Gastrocnemius medialis (tissue), 4 donors: ENCODE measurements at regions of chr14 and their contacts with region 1.

Region 1: DNA sequence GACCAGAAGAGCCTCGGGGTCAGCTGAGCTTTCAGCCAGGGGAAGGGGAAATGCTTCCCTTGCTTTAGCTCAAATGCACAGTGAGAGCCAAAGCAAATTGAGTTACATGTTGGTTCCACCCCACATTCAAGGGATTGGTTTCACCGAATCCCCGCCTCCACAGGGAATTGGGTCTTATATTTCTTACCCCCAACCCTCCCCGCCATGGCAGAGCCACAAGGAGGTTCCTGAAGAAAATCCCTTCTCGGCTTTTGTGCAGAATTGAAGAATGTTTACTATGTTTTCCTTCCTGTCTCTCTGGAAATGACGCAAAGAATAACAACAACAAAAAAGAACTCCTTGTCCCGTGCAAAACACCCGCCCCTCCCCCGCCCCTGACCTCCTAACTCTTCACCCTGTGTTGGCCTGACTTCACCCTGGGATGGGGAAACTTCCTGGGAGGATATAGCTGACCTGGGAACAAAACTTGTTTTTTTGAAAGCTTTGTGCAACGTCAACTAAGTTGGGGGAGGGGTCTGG is 21.9 kb upstream of the CIPC start:
- DNase-seq: peak; percentile 72 to 87
- ATAC-seq: peak; percentile 86 to 91
- H3K4me3 ChIP-seq: peak overlapping the region; percentile 47 to 54 (median 50)
- H3K27ac ChIP-seq: peak overlapping the region; percentile 80 to 94 (median 90)
- H3K4me1 ChIP-seq: peaks cover 13 to 31% of the 10 kb centered on the region in 2 donors
- H3K27me3 ChIP-seq: no peaks in the 10 kb centered on the region
- CTCF ChIP-seq: no peak
- POLR2A ChIP-seq: peak; percentile 57 to 73

Region 2: DNA sequence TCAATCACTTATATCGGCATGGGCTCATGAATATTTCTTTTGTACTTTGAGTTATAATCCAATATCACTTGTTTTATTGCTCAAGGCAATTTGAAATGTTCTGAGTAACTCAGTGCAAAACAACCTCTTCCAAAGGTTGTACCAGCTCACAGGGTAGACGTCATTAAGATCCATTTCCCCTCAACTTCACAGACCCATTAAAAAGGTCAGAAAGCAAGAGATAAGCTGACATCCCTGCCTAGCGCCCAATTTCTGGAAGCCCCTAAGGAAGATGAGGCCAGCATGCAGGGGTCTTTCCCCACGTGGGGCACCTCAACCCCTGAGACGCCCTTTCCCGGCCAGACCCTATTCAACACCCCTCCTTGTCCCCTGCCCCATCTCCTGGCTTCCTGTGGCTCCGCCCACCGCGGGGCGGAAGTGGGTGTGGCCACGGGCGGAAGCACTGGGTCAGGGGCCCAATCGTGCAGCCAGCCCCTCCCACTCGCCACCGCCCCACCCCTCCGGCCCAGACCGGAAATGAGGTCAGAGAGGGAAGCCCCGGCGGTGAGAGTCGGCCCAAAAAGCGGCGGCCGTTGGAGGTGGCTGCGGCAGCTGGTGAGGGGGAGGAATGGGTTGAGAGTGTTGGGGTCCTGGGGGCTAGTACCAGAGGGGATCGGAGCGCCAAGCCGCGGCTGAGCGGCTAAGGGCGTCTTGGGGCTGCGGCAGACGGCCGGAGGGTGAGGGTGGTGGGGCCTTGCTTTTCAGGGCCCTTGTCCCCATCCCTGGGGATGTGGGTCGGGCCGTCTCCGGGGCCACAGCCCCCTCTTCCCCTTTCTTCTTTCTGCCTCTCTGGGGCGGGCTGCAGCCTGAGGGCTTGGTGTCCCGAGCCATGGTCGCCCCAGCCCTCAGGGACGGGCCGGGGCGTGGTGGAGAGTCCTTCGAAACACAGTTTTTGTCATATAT is 924.5 kb before region 1 on chr14 and contains the start of gene GPATCH2L:
- in situ Hi-C with region 1: no loop called
- intact Hi-C with region 1: no loop called
- DNase-seq: peak; percentile 89 to 95
- ATAC-seq: peak; percentile 90 to 95
- H3K4me3 ChIP-seq: peak within 1 kb of the TSS; percentile 81 to 99 (median 92)
- H3K27ac ChIP-seq: peak within 1 kb of the TSS; percentile 83 to 95 (median 94)
- H3K4me1 ChIP-seq: peaks cover 42 to 44% of the 10 kb centered on the region in 2 donors
- H3K27me3 ChIP-seq: no peaks in the 10 kb centered on the region
- CTCF ChIP-seq: no peak
- POLR2A ChIP-seq: peak; percentile 93
- total RNA-seq, gene GPATCH2L: 24.6 to 63.5 (median 41.9) TPM

Region 3: GRCh38 chr14:76729953-76730505 is 346.1 kb before region 1 on chr14:
- in situ Hi-C with region 1: no loop called
- intact Hi-C with region 1: no loop called
- DNase-seq: no peak
- ATAC-seq: peak in 1 of 2 donors; percentile 45
- H3K4me3 ChIP-seq: no peak overlapping the region
- H3K27ac ChIP-seq: no peak overlapping the region
- H3K4me1 ChIP-seq: no peaks in the 10 kb centered on the region
- H3K27me3 ChIP-seq: no peaks in the 10 kb centered on the region
- CTCF ChIP-seq: no peak
- POLR2A ChIP-seq: no peak

Region 4: DNA sequence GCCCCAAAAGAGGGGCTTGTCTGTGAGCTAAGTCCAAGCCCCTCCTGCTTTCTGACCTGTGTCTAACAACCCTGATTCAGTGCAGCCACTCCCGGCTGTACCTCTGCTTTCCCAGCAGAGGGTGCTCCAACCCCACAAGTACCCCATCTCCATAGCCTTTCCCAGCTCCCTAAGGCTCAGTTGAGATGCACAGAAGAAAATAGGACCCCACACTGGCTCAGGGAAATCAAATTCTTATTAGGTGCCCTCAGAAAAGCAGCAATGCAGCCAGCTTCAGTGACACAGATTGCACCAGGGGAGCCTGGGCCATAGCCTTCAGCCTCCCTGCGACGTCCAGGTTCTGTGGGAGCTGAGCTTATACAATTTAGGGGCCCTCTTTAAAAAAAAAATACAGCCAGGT is 200.1 kb before region 1 on chr14:
- in situ Hi-C with region 1: loop called in 1 of 4 experiments (anchors 5 kb)
- intact Hi-C with region 1: no loop called
- DNase-seq: peak; percentile 31 to 51
- ATAC-seq: peak; percentile 84 to 87
- H3K4me3 ChIP-seq: no peak overlapping the region
- H3K27ac ChIP-seq: no peak overlapping the region
- H3K4me1 ChIP-seq: no peaks in the 10 kb centered on the region
- H3K27me3 ChIP-seq: no peaks in the 10 kb centered on the region
- CTCF ChIP-seq: peak; percentile 86 to 95 (median 90)
- POLR2A ChIP-seq: no peak

Region 5: DNA sequence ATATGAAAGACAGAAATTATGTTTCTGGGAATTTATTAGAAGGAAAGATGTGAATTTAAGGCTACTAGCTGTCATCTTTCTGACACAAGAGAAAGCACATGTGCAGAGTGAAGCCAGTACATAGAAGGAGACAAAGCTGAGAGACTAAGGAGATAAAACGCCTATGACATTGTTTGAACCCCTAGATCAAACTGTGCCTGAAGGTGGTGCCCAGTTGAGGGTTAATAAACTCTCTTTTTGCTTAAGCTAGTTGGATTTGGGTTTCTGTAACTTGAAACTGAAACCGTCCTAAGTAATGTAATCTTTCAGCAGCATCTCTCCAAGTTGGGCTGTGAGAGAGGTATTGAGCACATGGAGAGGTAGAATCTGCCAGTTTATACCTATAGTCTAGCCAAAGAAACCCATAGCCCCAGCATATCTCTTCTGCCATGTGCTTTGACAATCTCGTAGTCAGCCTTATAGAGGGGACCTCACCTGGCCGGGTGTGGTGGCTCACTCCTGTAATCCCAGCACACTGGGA is 165.7 kb before region 1 on chr14:
- in situ Hi-C with region 1: loop called in 2 of 4 experiments (anchors 5 kb)
- intact Hi-C with region 1: no loop called
- DNase-seq: no peak
- ATAC-seq: no peak
- H3K4me3 ChIP-seq: no peak overlapping the region
- H3K27ac ChIP-seq: no peak overlapping the region
- H3K4me1 ChIP-seq: peaks cover 7 to 11% of the 10 kb centered on the region in 2 donors
- H3K27me3 ChIP-seq: no peaks in the 10 kb centered on the region
- CTCF ChIP-seq: no peak
- POLR2A ChIP-seq: no peak

Region 6: DNA sequence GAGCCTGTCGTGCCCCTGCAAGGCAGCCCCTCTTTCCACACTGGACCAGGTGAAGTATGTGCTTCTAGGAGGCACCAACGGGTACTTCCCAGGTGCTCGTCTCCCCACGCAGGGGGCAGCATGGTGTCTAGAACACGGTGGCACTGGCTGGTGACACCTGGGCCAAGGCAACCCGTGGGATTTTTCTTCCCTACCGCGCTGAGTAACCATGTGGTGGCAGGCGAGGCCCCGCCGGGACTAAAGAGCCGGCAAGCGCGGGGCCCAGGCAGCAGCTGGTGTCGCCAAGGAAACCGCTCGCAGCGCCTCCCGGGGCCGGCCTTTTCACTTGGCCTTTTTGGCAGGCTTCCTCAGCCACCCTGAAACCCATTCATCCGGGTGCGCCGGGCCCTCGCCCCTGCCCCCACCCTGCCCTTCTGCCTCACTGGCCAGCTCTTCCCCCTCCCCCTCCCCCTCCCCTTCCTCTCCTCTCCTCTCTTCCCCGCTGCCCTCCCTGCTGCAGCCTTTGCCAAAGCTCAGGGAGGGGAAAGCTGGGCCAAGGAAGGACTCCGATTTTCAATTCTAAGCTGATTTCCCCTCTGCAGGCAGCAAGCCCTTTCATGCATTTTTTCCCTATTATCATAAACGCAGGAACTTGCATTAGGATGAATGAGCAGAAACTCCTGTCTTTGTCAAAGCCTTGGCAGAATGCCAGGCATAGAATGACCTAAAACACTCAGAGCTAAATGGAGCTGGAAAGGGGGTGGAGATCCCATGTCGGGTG is 128.9 kb before region 1 on chr14:
- in situ Hi-C with region 1: no loop called
- intact Hi-C with region 1: loop called (anchors 2 kb)
- DNase-seq: peak; percentile 78 to 87
- ATAC-seq: peak; percentile 91 to 94
- H3K4me3 ChIP-seq: peak overlapping the region in 3 of 4 donors; percentile 10 to 41 (median 25)
- H3K27ac ChIP-seq: peak overlapping the region; percentile 77 to 84 (median 81)
- H3K4me1 ChIP-seq: peaks cover 25 to 26% of the 10 kb centered on the region in 2 donors
- H3K27me3 ChIP-seq: no peaks in the 10 kb centered on the region
- CTCF ChIP-seq: peak; percentile 53 to 75 (median 66)
- POLR2A ChIP-seq: no peak

Region 7: GRCh38 chr14:76958980-76959710 is 117.0 kb before region 1 on chr14:
- in situ Hi-C with region 1: no loop called
- intact Hi-C with region 1: no loop called
- DNase-seq: no peak
- ATAC-seq: no peak
- H3K4me3 ChIP-seq: no peak overlapping the region
- H3K27ac ChIP-seq: peak overlapping the region in 1 of 4 donors; percentile 25
- H3K4me1 ChIP-seq: peaks cover 43 to 48% of the 10 kb centered on the region in 2 donors
- H3K27me3 ChIP-seq: no peaks in the 10 kb centered on the region
- CTCF ChIP-seq: no peak
- POLR2A ChIP-seq: no peak

Region 8: DNA sequence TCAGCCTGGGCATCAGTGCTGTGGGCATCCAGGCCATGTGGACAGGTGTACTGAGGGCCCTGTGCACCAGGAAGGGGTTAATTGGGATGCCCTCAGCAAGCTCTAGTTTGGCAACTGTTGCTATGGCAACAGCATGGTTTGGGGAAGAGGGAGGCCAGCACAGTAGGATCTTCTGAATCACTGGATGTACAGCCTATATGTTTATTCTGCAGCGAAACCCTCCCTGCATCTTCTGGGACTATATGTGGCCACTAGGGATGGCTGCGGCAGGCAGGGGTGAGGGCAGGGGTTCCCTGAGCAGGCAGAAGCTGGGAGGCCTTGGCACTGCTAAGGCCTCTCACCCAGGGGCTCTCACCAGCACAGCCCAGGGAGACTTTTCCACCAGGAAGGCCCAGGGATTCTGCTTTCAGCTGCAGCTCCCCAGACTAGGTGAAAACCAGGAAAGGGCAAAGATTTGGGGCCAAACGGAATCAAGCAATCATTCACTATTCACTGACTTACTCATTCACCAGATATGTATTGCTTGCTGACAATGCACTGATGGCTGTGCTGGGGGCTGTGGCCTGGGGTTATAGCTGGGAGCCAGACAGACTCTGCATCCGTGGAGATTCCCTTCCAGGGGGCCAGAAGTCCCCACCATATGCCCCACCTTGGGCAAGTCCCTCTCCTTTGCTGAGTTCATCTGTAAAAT is 90.5 kb before region 1 on chr14:
- in situ Hi-C with region 1: no loop called
- intact Hi-C with region 1: no loop called
- DNase-seq: no peak
- ATAC-seq: no peak
- H3K4me3 ChIP-seq: no peak overlapping the region
- H3K27ac ChIP-seq: no peak overlapping the region
- H3K4me1 ChIP-seq: no peaks in the 10 kb centered on the region
- H3K27me3 ChIP-seq: no peaks in the 10 kb centered on the region
- CTCF ChIP-seq: no peak
- POLR2A ChIP-seq: no peak

Region 9: GRCh38 chr14:77040059-77040740 is 36.0 kb before region 1 on chr14:
- in situ Hi-C with region 1: no loop called
- intact Hi-C with region 1: loop called (anchors 2 kb)
- DNase-seq: peak; percentile 94 to 96
- ATAC-seq: peak; percentile 66
- H3K4me3 ChIP-seq: peak overlapping the region; percentile 52 to 65 (median 58)
- H3K27ac ChIP-seq: peak overlapping the region; percentile 84 to 100 (median 96)
- H3K4me1 ChIP-seq: peaks cover 75 to 90% of the 10 kb centered on the region in 2 donors
- H3K27me3 ChIP-seq: no peaks in the 10 kb centered on the region
- CTCF ChIP-seq: no peak
- POLR2A ChIP-seq: peak in 1 of 2 donors; percentile 44

Region 10: DNA sequence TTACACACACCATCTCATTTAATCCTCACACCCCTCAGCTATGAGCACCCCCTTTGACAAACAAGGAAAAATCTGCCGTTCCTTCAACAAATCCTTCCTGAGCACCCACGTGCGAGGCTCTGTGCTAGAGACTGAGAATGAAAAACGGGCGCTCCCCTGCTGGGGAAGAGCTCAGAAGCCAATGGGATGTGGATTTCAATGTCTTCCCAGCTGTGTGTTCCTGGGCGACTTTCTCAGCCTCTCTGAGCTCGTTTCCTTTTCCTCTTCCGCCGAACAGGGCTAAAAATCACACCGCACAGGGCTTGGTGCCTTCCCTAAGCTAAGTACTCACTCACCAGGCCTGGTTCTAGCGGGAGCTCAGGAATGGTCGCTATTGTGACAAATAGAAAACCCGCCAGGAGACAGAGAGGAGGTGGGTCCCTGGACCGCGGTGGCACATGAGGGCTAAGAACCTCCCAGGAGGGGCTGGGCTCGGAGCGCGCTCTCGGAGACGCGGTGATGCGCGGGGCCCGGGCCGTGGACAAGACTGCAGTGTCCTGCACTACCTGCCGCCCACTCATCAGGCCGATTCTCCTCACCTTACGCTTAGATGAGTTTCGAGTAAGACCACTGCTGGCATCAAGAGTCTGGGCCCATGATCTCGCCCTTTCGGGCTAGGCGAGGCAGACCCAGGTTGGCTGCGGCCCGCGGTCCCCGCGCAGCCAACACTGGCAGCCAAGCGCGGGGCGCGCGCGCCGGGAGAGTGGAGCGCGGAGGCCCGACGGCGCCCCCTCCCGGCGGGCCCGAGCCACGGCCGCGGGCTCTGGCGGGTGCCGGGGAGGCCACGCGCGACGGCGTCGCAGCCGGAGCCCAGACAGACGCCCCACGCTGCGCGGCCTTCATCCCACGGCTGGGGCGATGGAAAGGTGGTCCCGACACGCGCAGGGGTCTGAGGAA is 48.4 kb after region 1 on chr14:
- in situ Hi-C with region 1: no loop called
- intact Hi-C with region 1: loop called (anchors 5 kb)
- DNase-seq: peak in 1 of 2 donors; percentile 46
- ATAC-seq: peak; percentile 57 to 64
- H3K4me3 ChIP-seq: peak overlapping the region; percentile 41 to 63 (median 52)
- H3K27ac ChIP-seq: peak overlapping the region; percentile 41 to 99 (median 90)
- H3K4me1 ChIP-seq: peaks cover 48 to 53% of the 10 kb centered on the region in 2 donors
- H3K27me3 ChIP-seq: no peaks in the 10 kb centered on the region
- CTCF ChIP-seq: peak in 4 of 5 experiments; percentile 93 to 96 (median 94)
- POLR2A ChIP-seq: no peak